ENCODE measurements at regions of chr10 and their contacts with region 1.

Region 1: GRCh38 chr10:114026189-114027040 is 17.3 kb upstream of the ADRB1 start:
- DNase-seq: peak; percentile 76
- ATAC-seq: peak; percentile 87
- H3K4me3 ChIP-seq: peak overlapping the region; percentile 48; the same call in 1 of the 2 replicates
- H3K27ac ChIP-seq: peak overlapping the region; percentile 94
- H3K4me1 ChIP-seq: peaks cover 42% of the 10 kb centered on the region
- H3K27me3 ChIP-seq: no peaks in the 10 kb centered on the region
- CTCF ChIP-seq: no peak

Region 2: GRCh38 chr10:113914956-113915355 is 111.5 kb before region 1 on chr10:
- CTCF ChIA-PET with region 1: no interaction called
- POLR2A ChIA-PET with region 1: no interaction called
- intact Hi-C with region 1: loop called (anchors 10 kb)
- DNase-seq: no peak
- ATAC-seq: no peak
- H3K4me3 ChIP-seq: no peak overlapping the region
- H3K27ac ChIP-seq: no peak overlapping the region
- H3K4me1 ChIP-seq: peaks cover 8% of the 10 kb centered on the region
- H3K27me3 ChIP-seq: no peaks in the 10 kb centered on the region
- CTCF ChIP-seq: no peak

Region 3: DNA sequence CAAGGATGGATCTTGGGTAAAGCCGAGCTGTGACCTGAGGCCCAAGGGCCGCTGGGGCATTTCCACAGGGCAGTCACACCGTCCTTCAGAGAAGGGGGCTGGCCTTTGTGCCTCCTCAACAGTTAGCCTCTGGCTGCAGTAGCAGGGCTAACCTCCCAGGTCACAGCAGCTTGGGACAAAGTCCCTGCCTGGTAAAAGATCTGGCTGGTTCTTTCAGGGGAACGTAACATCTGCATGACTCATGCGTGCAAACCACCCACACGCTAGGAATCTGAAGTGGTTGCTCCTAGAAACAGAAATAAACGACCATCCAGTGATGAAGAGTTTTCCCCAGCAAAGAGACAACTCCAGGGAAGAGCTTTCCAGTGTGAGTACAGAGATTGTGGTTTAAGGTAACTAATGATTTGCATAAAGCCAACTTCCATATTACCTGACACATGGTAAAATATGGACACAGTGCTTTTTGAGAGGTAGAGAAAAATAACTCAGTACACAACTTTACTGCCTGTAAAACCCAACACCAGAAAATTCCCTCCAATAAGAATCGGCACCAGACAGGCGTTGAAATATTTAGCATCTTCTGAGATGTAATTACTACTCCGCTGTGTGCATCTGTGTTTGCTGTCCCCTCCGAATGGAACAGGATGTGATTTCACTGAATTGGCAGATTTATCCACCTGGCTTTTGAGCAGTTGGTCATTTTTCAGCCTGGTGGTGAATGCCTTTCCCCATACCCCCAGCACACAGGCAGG is 67.6 kb before region 1 on chr10:
- CTCF ChIA-PET with region 1: no interaction called
- POLR2A ChIA-PET with region 1: no interaction called
- intact Hi-C with region 1: loop called (anchors 1 kb)
- DNase-seq: peak; percentile 79
- ATAC-seq: peak; percentile 85
- H3K4me3 ChIP-seq: peak overlapping the region; percentile 34; the same call in 1 of the 2 replicates
- H3K27ac ChIP-seq: peak overlapping the region; percentile 85
- H3K4me1 ChIP-seq: peaks cover 37% of the 10 kb centered on the region
- H3K27me3 ChIP-seq: no peaks in the 10 kb centered on the region
- CTCF ChIP-seq: no peak

Region 4: DNA sequence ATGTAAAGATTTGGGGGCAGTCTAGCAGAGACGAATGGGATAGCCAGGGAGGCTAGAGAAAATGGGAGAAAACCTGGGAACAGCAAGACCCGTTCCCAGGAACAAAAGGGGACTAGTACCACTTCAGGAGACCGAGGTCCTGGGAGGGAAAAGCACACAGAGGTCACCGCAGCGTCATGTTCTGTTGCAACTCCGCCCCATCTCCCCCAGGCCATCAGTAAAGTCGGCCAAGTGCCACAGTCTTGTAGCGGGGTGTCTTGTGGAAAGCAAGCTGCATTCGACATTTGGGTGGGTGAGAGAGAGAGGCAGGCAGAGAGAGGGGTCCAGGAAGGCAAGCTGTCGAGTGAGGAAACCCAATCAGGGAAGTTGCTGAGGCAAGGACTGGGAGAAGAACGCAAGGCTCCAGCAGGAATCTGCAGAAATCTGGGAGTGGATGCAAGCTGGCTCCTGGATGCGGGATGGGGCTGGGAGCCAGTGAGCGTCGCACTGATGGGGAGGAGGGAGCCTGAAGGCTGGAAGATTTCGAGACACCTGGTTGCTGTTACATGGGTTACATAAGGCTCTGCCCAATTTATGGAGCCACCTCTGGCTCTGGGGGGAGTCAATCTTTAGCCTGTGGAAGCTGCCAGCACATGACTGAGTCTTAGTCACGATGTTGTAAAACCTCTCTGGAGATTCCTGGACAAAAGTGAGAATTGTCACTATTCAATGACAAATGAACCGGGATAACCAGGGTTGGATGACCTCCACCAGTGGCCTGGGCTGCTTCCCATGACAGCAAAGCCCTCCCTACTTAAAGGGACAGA is 34.0 kb before region 1 on chr10:
- CTCF ChIA-PET with region 1: no interaction called
- POLR2A ChIA-PET with region 1: no interaction called
- intact Hi-C with region 1: loop called (anchors 1 kb)
- DNase-seq: peak; percentile 81
- ATAC-seq: peak; percentile 94
- H3K4me3 ChIP-seq: no peak overlapping the region
- H3K27ac ChIP-seq: no peak overlapping the region
- H3K4me1 ChIP-seq: peaks cover 14% of the 10 kb centered on the region
- H3K27me3 ChIP-seq: no peaks in the 10 kb centered on the region
- CTCF ChIP-seq: no peak

Region 5: GRCh38 chr10:114009281-114009996 is 17.0 kb before region 1 on chr10:
- CTCF ChIA-PET with region 1: no interaction called
- POLR2A ChIA-PET with region 1: no interaction called
- intact Hi-C with region 1: loop called (anchors 1 kb)
- DNase-seq: peak; percentile 51
- ATAC-seq: peak; percentile 70
- H3K4me3 ChIP-seq: no peak overlapping the region
- H3K27ac ChIP-seq: peak overlapping the region; percentile 37
- H3K4me1 ChIP-seq: peaks cover 14% of the 10 kb centered on the region
- H3K27me3 ChIP-seq: no peaks in the 10 kb centered on the region
- CTCF ChIP-seq: no peak

Region 6: GRCh38 chr10:114043532-114044246 is 17.3 kb after region 1 on chr10 and contains the start of gene ADRB1:
- CTCF ChIA-PET with region 1: no interaction called
- POLR2A ChIA-PET with region 1: no interaction called
- intact Hi-C with region 1: loop called (anchors 2 kb)
- DNase-seq: peak; percentile 19
- ATAC-seq: peak; percentile 57
- H3K4me3 ChIP-seq: peak within 1 kb of the TSS; percentile 63
- H3K27ac ChIP-seq: no peak within 1 kb of the TSS
- H3K4me1 ChIP-seq: peaks cover 8% of the 10 kb centered on the region
- H3K27me3 ChIP-seq: peaks cover 56% of the 10 kb centered on the region
- CTCF ChIP-seq: no peak
- total RNA-seq, gene ADRB1: 0.15 and 0.29 TPM in 2 replicates